HCT116 (cell line): ENCODE measurements at regions of chr1 and their contacts with region 1.

Region 1: GRCh38 chr1:39609618-39610331 is 29.7 kb downstream of the HEYL start:
- DNase-seq: peak; percentile 50
- ATAC-seq: peak; percentile 91
- H3K4me3 ChIP-seq: peak overlapping the region; percentile 28 to 32
- H3K27ac ChIP-seq: peak overlapping the region; percentile 15; the same call in 1 of the 2 replicates
- H3K4me1 ChIP-seq: peaks cover 2 to 18% of the 10 kb centered on the region in 2 experiments; a peak in 3 of 4 replicates
- H3K27me3 ChIP-seq: no peaks in the 10 kb centered on the region
- CTCF ChIP-seq: peak; percentile 77 to 95 (median 93)
- POLR2A ChIP-seq: peak; percentile 59
- RAD21 ChIP-seq: peak; percentile 46

Region 2: DNA sequence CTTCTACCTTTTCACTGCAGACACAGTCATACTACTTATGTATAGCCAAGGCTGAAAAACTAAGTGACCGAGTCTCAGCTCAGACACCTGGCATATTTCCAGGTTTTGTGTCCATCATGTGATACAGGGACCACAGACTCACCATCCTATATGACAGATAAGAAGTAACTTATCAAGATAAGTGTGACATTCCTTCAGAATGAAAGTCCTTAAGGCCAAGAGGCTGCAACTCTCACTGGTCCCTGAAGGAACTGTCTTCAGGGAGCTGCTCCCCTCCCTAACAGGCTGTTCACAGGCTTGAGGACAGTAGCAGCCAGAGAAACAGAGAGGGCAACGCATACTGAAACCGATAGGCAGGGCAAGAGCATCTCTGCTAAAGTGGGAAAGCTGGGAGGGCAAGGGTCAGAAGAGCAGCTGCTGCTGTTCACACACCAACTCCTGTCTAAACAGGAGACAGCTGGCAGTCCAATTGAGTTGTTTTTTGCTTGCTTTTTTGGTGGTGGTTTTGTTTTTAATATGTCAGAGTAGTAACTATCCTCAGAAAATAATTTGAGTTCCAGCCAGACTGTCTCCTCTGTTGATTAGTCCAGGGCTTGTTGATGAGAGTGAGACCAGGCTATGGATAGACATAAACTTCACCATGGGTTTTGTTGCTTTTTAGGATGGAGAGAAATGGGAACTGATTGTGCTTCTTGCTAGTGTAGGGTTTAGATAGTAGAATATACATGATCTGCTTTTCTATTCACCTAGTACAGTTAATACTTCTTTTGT is 337.6 kb before region 1 on chr1:
- CTCF ChIA-PET with region 1: no interaction called
- POLR2A ChIA-PET with region 1: no interaction called
- RAD21 ChIA-PET with region 1: no interaction called
- intact Hi-C with region 1: no loop called
- DNase-seq: no peak
- ATAC-seq: no peak
- H3K4me3 ChIP-seq: no peak overlapping the region
- H3K27ac ChIP-seq: no peak overlapping the region
- H3K4me1 ChIP-seq: no peaks in the 10 kb centered on the region; a peak in 1 of 4 replicates
- H3K27me3 ChIP-seq: no peaks in the 10 kb centered on the region
- CTCF ChIP-seq: no peak
- POLR2A ChIP-seq: no peak
- RAD21 ChIP-seq: no peak

Region 3: GRCh38 chr1:39646232-39647081 is 36.7 kb after region 1 on chr1:
- CTCF ChIA-PET with region 1: interaction called, 36 read pairs
- POLR2A ChIA-PET with region 1: no interaction called
- RAD21 ChIA-PET with region 1: no interaction called
- intact Hi-C with region 1: no loop called
- DNase-seq: no peak
- ATAC-seq: no peak
- H3K4me3 ChIP-seq: no peak overlapping the region
- H3K27ac ChIP-seq: no peak overlapping the region
- H3K4me1 ChIP-seq: no peaks in the 10 kb centered on the region
- H3K27me3 ChIP-seq: no peaks in the 10 kb centered on the region
- CTCF ChIP-seq: no peak
- POLR2A ChIP-seq: no peak
- RAD21 ChIP-seq: no peak

Region 4: DNA sequence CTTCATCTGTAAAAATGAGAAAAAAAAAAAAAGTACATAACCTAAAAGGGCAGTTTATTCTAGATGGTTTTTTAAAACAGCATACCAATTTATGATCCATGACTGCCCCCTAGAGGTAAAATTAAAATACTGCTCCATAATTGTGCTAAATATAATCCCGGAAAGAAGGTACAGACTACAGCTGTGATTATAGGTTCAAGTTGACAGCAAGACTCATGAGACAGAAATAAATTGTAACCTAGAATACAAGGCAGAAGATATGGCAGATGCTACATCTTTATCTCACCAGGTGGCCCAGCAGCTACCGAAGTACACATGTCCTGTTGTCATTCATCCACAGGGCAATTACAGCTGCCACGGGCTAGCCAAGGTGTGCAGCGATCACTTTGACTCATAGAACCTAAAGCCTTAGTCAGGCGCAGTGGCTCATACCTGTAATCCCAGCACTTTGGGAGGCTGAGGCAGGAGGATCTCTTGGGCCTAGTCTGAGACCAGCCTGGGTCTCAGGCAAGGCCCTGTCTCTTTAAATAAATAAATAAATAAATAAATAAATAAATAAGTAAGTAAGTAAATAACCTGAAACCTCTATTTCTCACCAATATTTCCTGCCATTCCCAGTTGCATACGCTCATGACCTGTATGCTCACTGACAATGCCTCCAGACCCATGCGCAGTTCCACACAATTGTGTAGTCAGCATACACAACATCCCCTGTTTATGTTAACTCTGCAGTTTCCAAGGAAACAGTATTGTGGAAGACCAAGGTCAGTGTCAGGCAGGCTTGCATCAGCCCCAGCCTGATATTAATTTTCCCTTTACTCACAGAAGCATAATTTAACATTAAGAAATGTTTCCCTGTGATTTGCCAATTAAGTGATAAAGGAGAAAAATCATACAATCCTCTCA is 110.6 kb after region 1 on chr1:
- CTCF ChIA-PET with region 1: interaction called, 29 read pairs
- POLR2A ChIA-PET with region 1: no interaction called
- RAD21 ChIA-PET with region 1: interaction called, 4 to 8 read pairs
- intact Hi-C with region 1: loop called (anchors 1 kb)
- DNase-seq: peak; percentile 48
- ATAC-seq: peak; percentile 82
- H3K4me3 ChIP-seq: peak overlapping the region in 1 of 2 experiments; percentile 35; a peak in 1 of 4 replicates
- H3K27ac ChIP-seq: no peak overlapping the region
- H3K4me1 ChIP-seq: peaks cover 0 to 3% of the 10 kb centered on the region in 2 experiments; a peak in 1 of 4 replicates
- H3K27me3 ChIP-seq: peaks cover 4% of the 10 kb centered on the region; the same call in 1 of the 2 replicates
- CTCF ChIP-seq: peak; percentile 37 to 80 (median 70); a peak in 5 of 6 replicates
- POLR2A ChIP-seq: no peak
- RAD21 ChIP-seq: peak; percentile 85

Region 5: DNA sequence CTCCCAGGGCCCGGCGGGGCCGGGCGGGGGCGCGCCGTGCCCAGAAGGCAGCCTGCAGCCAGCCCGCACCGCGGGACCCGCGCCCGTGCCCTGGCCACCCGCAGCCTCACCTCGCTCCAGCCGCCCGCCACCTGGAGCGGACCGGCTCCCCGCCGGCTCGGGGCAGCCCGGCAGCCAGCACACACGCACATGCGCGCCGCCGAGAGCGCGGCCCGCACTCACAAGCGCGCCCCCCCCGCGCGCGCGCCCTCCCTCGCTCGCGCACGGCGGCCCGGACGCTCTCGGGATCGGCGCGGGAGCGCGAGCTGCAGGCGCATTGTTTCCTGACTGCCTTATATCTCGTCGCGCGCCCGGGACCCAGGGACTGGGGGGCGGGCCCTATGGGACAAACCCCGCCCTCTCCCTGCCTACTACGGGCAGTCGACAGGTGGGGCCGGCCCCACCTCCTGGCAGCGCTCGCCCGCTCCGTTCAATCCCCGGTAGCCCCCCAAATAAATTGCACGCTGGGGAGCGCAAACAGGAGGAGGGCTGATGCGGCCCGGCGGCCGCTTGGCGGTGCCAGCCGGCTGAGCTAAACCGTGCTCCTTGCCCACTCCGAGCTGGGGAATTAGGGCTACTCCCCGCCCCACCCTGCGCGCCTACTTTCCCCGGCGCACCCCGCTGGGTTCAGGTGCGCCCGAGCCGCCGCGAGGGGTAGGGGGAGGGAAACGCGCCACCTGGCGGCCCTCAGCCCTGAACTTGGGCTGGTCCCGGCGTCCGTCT is 292.1 kb after region 1 on chr1 and contains the start of gene MYCL:
- CTCF ChIA-PET with region 1: interaction called, 4 read pairs
- POLR2A ChIA-PET with region 1: no interaction called
- RAD21 ChIA-PET with region 1: no interaction called
- intact Hi-C with region 1: loop called (anchors 5 kb)
- DNase-seq: peak; percentile 87
- ATAC-seq: peak; percentile 93
- H3K4me3 ChIP-seq: peak within 1 kb of the TSS; percentile 72 to 76
- H3K27ac ChIP-seq: peak within 1 kb of the TSS; percentile 58; the same call in 1 of the 2 replicates
- H3K4me1 ChIP-seq: peaks cover 18 to 33% of the 10 kb centered on the region in 2 experiments
- H3K27me3 ChIP-seq: no peaks in the 10 kb centered on the region
- CTCF ChIP-seq: peak; percentile 76 to 87 (median 78)
- POLR2A ChIP-seq: peak; percentile 60
- RAD21 ChIP-seq: peak; percentile 82
- total RNA-seq, gene MYCL: 10.0 TPM